Mammary epithelial cell (primary cell): ENCODE measurements at regions of chr1 and their contacts with region 1.

Region 1: DNA sequence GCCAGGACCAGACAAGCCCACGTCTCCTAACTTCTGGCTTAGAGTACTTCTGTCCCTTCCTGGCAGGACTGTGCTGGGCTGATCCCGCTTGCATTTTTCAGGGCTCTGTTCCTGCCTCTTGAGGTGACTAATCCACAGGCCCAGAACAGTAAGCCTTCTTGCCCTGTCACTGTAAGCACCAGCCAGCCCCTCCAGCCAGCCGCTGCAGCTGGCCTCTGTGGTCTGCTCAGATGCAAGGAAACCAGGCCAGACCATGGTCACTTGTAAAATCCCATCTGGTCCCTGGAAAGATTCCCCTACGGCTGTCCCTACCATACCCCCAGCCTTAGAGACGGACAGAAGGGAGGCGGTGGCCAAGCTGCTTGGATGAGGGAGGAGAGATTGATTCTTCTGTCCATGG is 74.2 kb downstream of the KIRREL1 start:
- DNase-seq: no peak
- H3K4me3 ChIP-seq: no peak overlapping the region
- H3K27ac ChIP-seq: no peak overlapping the region
- H3K4me1 ChIP-seq: peaks cover 24% of the 10 kb centered on the region
- H3K27me3 ChIP-seq: no peaks in the 10 kb centered on the region
- CTCF ChIP-seq: no peak

Region 2: DNA sequence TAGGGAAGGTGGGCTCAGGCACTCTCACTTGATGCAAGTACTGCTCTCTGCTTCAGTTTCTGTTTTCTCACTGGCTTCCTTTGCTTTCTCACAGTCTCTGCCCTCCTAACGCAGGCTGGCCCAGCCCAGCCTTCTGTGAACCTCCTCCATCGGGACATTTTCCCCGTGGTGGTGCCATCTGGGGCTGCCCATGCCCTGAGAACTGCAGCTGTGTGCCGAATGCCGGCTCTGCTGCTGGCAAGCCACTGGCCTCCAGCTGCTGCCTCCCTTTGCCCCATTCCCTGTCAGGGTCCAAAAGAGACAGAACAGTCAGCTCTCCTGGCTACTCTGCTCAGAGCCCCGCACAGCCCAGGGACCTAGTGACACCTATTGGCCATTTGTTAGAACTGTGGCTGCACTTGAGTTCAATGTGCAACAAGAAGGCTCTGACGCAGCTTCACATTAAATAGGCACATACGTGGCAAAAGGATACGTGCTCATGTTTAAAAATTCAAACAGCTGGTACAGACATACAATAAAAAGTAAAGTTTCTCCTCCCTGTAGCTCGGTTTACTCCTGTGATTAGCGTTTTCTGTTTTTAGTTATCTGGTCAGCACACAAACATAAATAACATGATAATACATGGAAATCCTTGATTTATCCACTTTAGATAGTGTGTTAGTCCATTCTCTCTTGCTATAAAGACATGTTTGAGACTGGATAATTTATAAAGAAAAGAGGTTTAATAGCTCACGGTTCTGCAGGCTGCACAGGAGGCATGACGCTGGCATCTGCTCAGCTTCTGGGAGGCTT is 562.0 kb before region 1 on chr1:
- CTCF ChIA-PET with region 1: no interaction called
- dilution Hi-C with region 1: no loop called
- in situ Hi-C with region 1: no loop called
- intact Hi-C with region 1: no loop called
- DNase-seq: peak; percentile 36
- H3K4me3 ChIP-seq: no peak overlapping the region
- H3K27ac ChIP-seq: no peak overlapping the region
- H3K4me1 ChIP-seq: no peaks in the 10 kb centered on the region
- H3K27me3 ChIP-seq: no peaks in the 10 kb centered on the region
- CTCF ChIP-seq: peak; percentile 83 to 84

Region 3: DNA sequence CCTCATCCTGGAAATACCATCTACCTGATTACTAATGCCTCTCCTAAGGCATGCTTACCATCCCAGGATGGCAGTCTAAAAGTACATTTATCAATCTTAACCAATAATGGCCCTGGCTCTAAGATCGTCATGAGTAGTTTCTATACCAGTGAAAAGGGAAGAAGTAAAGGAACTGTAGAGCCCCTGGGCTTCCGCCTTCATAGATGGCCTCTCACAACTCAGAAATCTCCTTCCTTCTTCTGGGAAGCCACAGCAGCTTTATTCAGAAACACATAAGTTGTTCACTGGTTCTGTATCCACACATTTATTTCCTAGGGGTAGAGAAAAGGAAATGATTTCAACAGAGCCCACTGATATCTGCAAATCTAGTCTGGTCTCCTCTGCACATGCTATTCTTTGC is 185.1 kb before region 1 on chr1:
- CTCF ChIA-PET with region 1: no interaction called
- dilution Hi-C with region 1: no loop called
- in situ Hi-C with region 1: no loop called
- intact Hi-C with region 1: no loop called
- DNase-seq: no peak
- H3K4me3 ChIP-seq: no peak overlapping the region
- H3K27ac ChIP-seq: no peak overlapping the region
- H3K4me1 ChIP-seq: no peaks in the 10 kb centered on the region
- H3K27me3 ChIP-seq: peaks cover 7% of the 10 kb centered on the region
- CTCF ChIP-seq: no peak

Region 4: DNA sequence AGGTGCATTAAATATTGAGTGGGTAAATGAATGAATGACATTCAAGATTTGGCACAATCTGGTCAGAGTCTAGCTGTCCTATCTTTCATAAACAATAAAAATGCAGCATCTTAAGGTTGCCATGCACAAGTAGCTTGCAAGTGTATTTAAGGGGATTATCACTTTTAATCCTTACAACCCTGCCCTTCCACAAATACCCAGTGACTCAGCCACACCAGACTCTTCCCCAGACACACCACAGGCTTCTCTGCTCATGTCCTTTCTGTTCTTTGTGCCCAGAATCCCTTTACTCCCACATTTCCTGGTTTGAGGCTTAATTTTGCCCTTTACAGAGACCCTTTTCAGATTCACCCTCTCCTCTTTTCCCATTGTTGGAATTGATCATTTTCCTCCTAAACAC is 14.4 kb before region 1 on chr1:
- CTCF ChIA-PET with region 1: interaction called, 7 read pairs
- dilution Hi-C with region 1: no loop called
- in situ Hi-C with region 1: no loop called
- intact Hi-C with region 1: loop called (anchors 2 kb)
- DNase-seq: no peak
- H3K4me3 ChIP-seq: no peak overlapping the region
- H3K27ac ChIP-seq: no peak overlapping the region
- H3K4me1 ChIP-seq: peaks cover 5% of the 10 kb centered on the region
- H3K27me3 ChIP-seq: no peaks in the 10 kb centered on the region
- CTCF ChIP-seq: no peak